Caco-2 (cell line): ENCODE measurements at regions of chr2 and their contacts with region 1.

Region 1: DNA sequence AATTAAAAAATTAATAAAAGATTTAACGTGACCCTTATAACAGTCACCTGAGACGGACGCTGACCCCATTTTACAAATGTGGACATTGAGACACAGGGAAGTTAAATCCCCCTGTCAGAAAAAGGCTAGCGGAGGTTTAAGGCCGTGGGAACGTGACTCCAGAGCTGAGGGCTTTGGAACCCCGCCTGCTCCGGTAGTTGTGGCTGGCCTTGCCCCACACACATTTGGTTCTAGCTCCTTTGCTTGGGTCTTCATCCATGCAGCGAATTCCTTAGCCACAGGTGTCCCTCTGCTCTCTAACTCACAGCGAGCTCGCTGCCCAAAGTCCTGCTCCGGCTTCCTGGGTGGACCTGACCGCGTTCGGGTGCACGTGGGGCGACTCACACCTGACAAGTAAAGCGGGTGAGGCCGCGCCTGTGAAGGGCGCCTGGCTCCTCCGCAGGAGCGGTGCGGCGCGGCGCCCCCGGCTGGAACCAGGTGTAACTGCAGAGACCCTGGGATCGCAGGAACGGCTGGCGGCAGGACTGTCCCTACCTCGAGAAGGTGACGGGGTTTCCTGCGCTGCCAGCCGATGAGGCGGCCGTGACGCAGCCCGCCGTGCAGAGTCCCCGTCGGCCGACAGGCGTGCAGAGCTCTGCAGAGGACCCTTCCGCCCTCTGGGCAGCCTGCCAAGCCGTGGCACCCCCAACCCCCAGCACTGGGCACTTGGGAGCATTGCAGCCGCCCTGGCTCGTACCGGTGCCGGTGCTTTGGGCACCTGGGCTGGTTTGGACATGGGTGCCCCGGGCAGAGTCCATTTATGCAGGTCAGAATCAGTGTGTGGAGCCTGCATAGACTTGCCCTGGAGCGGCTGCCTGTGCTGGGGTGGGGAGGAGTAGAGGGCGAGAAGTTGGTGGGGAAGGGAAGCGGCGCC is 2.4 kb upstream of the PROC start:
- DNase-seq: peak; percentile 86 to 92
- H3K4me3 ChIP-seq: peak overlapping the region; percentile 47
- H3K4me3 Mint-ChIP-seq: peak overlapping the region; percentile 76
- H3K27ac Mint-ChIP-seq: peak overlapping the region; percentile 46
- H3K4me1 ChIP-seq: peaks cover 36% of the 10 kb centered on the region
- H3K4me1 Mint-ChIP-seq: peaks cover 35% of the 10 kb centered on the region
- H3K27me3 ChIP-seq: no peaks in the 10 kb centered on the region
- H3K27me3 Mint-ChIP-seq: no peaks in the 10 kb centered on the region
- CTCF ChIP-seq: peak; percentile 89 to 92

Region 2: DNA sequence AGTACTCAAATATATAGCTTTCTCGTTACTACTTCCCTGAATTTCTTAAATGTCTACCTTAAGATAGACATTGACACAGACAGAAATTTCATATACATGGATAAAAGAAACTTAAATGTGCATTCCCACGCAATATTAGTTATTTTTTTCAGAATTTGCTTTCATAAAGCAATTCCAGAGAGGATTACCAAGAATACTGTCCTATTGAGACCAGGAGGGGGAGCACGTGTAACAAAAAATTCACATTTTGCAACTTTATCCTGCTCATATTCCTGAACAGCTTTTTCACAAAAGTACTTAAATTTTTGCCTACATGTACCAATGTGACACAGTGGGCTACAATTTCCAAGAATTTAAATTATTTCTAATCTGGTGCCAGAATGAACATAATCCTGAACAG is 91.2 kb before region 1 on chr2:
- CTCF ChIA-PET with region 1: no interaction called
- POLR2A ChIA-PET with region 1: no interaction called
- intact Hi-C with region 1: loop called (anchors 1 kb)
- DNase-seq: peak in 1 of 2 experiments; percentile 48
- H3K4me3 ChIP-seq: no peak overlapping the region
- H3K4me3 Mint-ChIP-seq: no peak overlapping the region
- H3K27ac Mint-ChIP-seq: no peak overlapping the region
- H3K4me1 ChIP-seq: no peaks in the 10 kb centered on the region
- H3K4me1 Mint-ChIP-seq: no peaks in the 10 kb centered on the region
- H3K27me3 ChIP-seq: no peaks in the 10 kb centered on the region
- H3K27me3 Mint-ChIP-seq: no peaks in the 10 kb centered on the region
- CTCF ChIP-seq: peak; percentile 67 to 79

Region 3: DNA sequence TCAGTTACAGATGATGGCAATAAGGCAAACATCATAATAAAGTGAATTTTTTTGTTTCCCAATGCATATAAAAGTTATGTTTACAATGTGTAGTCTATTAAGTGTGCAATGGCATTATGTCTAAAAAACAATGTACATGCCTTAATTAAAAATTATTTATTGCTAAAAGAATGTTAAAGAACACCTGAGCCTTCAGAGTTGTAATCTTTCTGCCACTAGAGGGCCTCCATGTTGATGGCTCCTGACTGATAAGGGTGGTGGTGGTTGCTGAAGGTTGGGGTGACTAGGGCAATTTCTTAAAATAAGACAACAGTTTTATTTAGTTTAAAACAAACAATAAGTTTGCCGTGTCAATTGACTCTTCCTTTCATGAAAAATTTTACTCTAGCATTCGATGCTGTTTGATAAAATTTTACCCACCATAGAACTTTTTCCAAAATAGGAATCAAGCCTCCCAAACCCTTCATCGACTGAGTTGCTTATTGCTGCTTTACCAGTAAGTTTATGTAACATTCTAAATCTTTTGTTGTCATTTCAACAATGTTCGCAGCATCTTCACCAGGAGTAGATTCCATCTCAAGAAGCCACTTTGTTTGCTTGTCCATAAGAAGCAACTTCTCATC is 60.4 kb before region 1 on chr2:
- CTCF ChIA-PET with region 1: no interaction called
- POLR2A ChIA-PET with region 1: no interaction called
- intact Hi-C with region 1: loop called (anchors 2 kb)
- DNase-seq: peak in 1 of 2 experiments; percentile 37
- H3K4me3 ChIP-seq: no peak overlapping the region
- H3K4me3 Mint-ChIP-seq: no peak overlapping the region
- H3K27ac Mint-ChIP-seq: no peak overlapping the region
- H3K4me1 ChIP-seq: peaks cover 5% of the 10 kb centered on the region; the same call in 1 of the 2 replicates
- H3K4me1 Mint-ChIP-seq: peaks cover 16% of the 10 kb centered on the region
- H3K27me3 ChIP-seq: no peaks in the 10 kb centered on the region
- H3K27me3 Mint-ChIP-seq: no peaks in the 10 kb centered on the region
- CTCF ChIP-seq: peak; percentile 68

Region 4: DNA sequence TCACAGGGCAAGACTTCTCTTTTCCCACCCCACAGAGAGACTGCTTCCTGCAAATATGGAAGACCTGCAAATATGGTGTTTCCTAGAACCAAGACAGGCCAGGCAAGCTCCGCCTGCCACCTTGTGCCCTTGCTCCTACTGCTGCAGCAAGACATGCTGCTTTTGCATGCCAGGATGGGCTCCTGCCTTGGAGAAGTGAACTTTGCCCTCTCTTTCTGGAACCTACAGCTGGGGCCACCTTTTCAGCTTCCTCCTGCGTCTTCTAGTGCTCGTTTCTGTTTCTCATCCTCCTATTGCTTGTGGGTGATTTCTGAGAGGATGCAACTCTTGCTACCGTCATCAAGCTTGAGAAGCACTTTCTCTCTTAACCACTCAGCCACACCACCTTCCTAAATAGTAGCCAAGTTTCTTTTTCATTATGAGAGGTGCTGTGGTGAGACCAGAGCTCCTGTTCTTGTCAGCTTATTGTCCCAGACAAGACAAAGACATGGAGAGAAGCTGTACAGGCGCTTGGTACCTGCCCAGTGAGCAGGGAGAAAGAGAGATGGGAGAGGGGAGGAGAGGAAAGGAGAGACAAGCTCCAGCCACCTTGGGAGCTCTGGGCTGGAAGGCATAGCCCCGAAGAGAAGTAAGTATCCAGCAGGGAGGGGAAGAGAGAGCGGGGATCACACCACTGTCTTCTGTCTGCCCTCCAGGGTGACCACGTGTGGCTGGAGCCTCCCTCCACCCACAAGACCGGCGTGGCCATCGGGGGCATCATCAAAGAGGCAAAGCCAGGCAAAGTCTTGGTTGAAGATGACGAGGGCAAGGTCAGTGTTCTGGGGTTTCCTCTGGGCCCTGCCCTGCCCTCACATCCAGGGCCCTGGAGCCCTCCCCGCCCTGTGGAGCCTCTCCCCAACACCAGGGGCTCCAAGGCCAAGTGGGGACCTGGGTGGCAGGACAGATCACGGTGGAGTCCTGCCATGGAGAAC is 147.9 kb after region 1 on chr2:
- CTCF ChIA-PET with region 1: no interaction called
- POLR2A ChIA-PET with region 1: no interaction called
- intact Hi-C with region 1: no loop called
- DNase-seq: no peak
- H3K4me3 ChIP-seq: no peak overlapping the region
- H3K4me3 Mint-ChIP-seq: no peak overlapping the region
- H3K27ac Mint-ChIP-seq: no peak overlapping the region
- H3K4me1 ChIP-seq: no peaks in the 10 kb centered on the region
- H3K4me1 Mint-ChIP-seq: no peaks in the 10 kb centered on the region
- H3K27me3 ChIP-seq: no peaks in the 10 kb centered on the region
- H3K27me3 Mint-ChIP-seq: no peaks in the 10 kb centered on the region
- CTCF ChIP-seq: no peak